ENCODE measurements at regions of chr6 and their contacts with region 1.

Region 1: DNA sequence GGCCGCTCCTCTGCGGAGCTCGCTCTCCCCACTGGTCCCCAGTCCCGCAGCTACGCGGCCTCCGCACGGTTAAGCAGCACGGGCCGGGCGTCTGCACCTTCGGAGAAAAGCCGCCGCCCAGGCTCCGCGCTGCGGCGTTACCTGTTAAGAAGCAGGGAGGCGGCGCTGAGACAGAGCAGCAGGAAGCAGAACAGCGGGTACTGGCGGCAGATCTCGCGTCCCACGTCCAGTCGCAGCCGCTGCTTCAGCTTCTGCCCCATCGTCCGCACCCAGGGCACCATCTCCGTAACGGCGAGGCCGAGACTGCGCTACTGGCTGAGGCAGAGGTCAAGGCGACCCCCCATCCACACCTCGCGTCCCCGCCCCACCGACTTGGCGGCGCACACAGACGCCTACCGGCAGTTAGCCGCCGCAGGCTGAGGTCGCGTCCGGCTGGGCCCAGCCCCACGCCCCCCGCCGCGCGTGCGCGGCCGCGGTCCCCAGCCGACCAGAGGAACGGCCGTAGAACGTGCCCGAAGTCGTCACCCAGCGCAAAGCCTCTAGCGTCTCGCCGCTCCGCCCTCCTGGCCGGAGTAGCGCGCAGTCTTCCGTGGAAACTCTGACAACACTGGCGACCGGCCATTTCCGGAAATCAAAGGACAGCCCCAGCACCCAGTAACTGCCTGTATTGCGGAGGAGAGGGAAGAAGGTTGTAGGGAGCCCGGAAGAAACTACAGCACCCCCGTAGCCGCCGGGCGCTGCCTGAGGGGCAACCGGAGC is at the start of gene SNX14:
- H3K4me3 Mint-ChIP-seq: peak within 1 kb of the TSS; percentile 96
- H3K27ac Mint-ChIP-seq: peak within 1 kb of the TSS; percentile 99
- H3K4me1 Mint-ChIP-seq: peaks cover 40% of the 10 kb centered on the region
- H3K27me3 Mint-ChIP-seq: no peaks in the 10 kb centered on the region

Region 2: GRCh38 chr6:84645000-84645399 is 948.6 kb before region 1 on chr6:
- intact Hi-C with region 1: no loop called
- H3K4me3 Mint-ChIP-seq: no peak overlapping the region
- H3K27ac Mint-ChIP-seq: no peak overlapping the region
- H3K4me1 Mint-ChIP-seq: no peaks in the 10 kb centered on the region
- H3K27me3 Mint-ChIP-seq: no peaks in the 10 kb centered on the region

Region 3: DNA sequence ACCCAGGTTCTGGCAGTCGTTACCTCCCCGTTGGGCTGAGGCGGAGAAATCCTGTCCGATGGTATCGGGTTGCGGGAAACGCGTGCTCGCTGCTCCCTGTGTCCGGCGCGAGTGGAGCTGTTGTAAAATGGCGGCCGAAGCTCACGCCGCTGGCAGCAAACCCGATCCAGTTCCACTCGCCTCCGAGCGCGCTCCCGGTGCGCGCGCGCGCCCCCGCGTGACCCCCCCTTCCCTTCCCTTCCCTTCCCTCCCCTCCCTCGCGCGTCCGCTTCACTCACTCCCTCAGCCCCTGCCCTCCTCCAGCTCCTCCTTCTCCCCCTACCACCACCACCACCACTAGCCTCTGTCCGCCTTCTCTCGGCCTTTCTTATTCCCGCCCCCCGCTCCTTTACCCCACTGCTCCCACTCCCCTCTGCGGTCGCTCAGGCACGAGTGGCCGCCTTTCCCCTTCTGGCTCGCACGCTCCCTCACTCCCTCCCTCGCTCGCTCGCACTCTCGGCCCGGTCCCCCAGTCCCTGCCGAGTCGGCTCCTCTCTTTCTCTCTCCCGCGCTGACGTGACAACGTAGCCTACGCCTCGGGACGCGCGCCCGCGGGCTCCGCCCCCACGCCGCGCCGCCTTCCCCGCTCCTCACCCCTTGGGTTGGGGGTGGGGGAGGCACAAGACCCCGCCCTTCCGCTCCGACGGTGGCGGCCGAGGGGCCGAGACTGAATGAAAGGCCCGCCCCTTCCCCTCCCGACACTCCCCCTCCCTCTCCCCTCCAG is 49.3 kb after region 1 on chr6 and contains the start of gene SYNCRIP:
- intact Hi-C with region 1: loop called (anchors 1 kb)
- H3K4me3 Mint-ChIP-seq: peak within 1 kb of the TSS; percentile 99
- H3K27ac Mint-ChIP-seq: peak within 1 kb of the TSS; percentile 100
- H3K4me1 Mint-ChIP-seq: peaks cover 51% of the 10 kb centered on the region
- H3K27me3 Mint-ChIP-seq: no peaks in the 10 kb centered on the region